Naive thymus-derived CD4-positive, alpha-beta T cell (primary cell): ENCODE measurements at regions of chr6 and their contacts with region 1.

Region 1: GRCh38 chr6:131519670-131520436 is 53.2 kb upstream of the ARG1 start:
- DNase-seq: peak in 7 of 9 donors; percentile 38 to 64 (median 55)
- ATAC-seq: peak; percentile 92
- H3K4me3 ChIP-seq: no peak overlapping the region
- H3K4me3 Mint-ChIP-seq: no peak overlapping the region
- H3K27ac ChIP-seq: no peak overlapping the region
- H3K27ac Mint-ChIP-seq: peak overlapping the region in 6 of 9 donors; percentile 29 to 69 (median 40)
- H3K4me1 ChIP-seq: peaks cover 0 to 9% of the 10 kb centered on the region in 2 donors
- H3K4me1 Mint-ChIP-seq: peaks cover 8 to 25% (median 20%) of the 10 kb centered on the region in 7 donors
- H3K27me3 ChIP-seq: no peaks in the 10 kb centered on the region
- H3K27me3 Mint-ChIP-seq: peaks cover 0 to 8% (median 0%) of the 10 kb centered on the region in 5 donors

Region 2: DNA sequence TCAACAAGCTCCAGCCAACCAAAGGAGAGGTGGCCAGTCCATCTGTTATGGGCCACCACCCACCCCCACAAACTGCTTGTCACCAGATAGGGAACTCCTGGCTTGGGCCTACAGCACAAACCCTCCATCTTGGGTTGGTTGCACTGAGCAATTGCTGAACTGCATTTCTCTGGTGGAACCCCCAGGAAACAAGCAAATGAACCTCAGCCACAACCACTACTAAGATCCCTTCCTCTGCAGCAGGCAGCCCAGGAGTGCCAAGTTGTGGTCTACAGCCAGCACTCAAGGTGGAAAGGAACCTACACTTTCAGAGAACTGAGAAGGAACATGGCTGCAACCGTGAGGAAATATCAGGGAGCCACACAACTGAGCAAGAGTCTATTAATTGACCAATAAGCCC is 982.4 kb before region 1 on chr6:
- CTCF ChIA-PET with region 1: no interaction called
- POLR2A ChIA-PET with region 1: no interaction called
- intact Hi-C with region 1: no loop called
- DNase-seq: no peak
- ATAC-seq: peak; percentile 38
- H3K4me3 ChIP-seq: no peak overlapping the region
- H3K4me3 Mint-ChIP-seq: peak overlapping the region in 7 of 10 donors; percentile 9 to 50 (median 19)
- H3K27ac ChIP-seq: no peak overlapping the region
- H3K27ac Mint-ChIP-seq: peak overlapping the region in 3 of 9 donors; percentile 7 to 58 (median 43)
- H3K4me1 ChIP-seq: peaks cover 0 to 10% of the 10 kb centered on the region in 2 donors
- H3K4me1 Mint-ChIP-seq: peaks cover 6 to 21% (median 12%) of the 10 kb centered on the region in 7 donors
- H3K27me3 ChIP-seq: no peaks in the 10 kb centered on the region
- H3K27me3 Mint-ChIP-seq: no peaks in the 10 kb centered on the region

Region 3: GRCh38 chr6:131182991-131183425 is 336.8 kb before region 1 on chr6:
- CTCF ChIA-PET with region 1: interaction called, 7 read pairs
- POLR2A ChIA-PET with region 1: interaction called, 3 read pairs
- intact Hi-C with region 1: loop called in 1 of 2 experiments (anchors 1 kb)
- DNase-seq: peak in 8 of 9 donors; percentile 6 to 57 (median 47)
- ATAC-seq: peak; percentile 83
- H3K4me3 ChIP-seq: no peak overlapping the region
- H3K4me3 Mint-ChIP-seq: peak overlapping the region; percentile 10 to 85 (median 72)
- H3K27ac ChIP-seq: no peak overlapping the region
- H3K27ac Mint-ChIP-seq: peak overlapping the region; percentile 86 to 98 (median 94)
- H3K4me1 ChIP-seq: peaks cover 0 to 8% of the 10 kb centered on the region in 2 donors
- H3K4me1 Mint-ChIP-seq: peaks cover 5 to 22% (median 17%) of the 10 kb centered on the region in 7 donors
- H3K27me3 ChIP-seq: no peaks in the 10 kb centered on the region
- H3K27me3 Mint-ChIP-seq: no peaks in the 10 kb centered on the region

Region 4: GRCh38 chr6:131586543-131586942 is 66.7 kb after region 1 on chr6:
- CTCF ChIA-PET with region 1: no interaction called
- POLR2A ChIA-PET with region 1: no interaction called
- intact Hi-C with region 1: loop called in 1 of 2 experiments (anchors 5 kb)
- DNase-seq: no peak
- ATAC-seq: no peak
- H3K4me3 ChIP-seq: no peak overlapping the region
- H3K4me3 Mint-ChIP-seq: no peak overlapping the region
- H3K27ac ChIP-seq: no peak overlapping the region
- H3K27ac Mint-ChIP-seq: no peak overlapping the region
- H3K4me1 ChIP-seq: no peaks in the 10 kb centered on the region
- H3K4me1 Mint-ChIP-seq: peaks cover 0 to 4% (median 0%) of the 10 kb centered on the region in 7 donors
- H3K27me3 ChIP-seq: no peaks in the 10 kb centered on the region
- H3K27me3 Mint-ChIP-seq: no peaks in the 10 kb centered on the region